Cardiac septum (tissue), 1 donor: ENCODE measurements at regions of chr2 and their contacts with region 1.

Region 1: DNA sequence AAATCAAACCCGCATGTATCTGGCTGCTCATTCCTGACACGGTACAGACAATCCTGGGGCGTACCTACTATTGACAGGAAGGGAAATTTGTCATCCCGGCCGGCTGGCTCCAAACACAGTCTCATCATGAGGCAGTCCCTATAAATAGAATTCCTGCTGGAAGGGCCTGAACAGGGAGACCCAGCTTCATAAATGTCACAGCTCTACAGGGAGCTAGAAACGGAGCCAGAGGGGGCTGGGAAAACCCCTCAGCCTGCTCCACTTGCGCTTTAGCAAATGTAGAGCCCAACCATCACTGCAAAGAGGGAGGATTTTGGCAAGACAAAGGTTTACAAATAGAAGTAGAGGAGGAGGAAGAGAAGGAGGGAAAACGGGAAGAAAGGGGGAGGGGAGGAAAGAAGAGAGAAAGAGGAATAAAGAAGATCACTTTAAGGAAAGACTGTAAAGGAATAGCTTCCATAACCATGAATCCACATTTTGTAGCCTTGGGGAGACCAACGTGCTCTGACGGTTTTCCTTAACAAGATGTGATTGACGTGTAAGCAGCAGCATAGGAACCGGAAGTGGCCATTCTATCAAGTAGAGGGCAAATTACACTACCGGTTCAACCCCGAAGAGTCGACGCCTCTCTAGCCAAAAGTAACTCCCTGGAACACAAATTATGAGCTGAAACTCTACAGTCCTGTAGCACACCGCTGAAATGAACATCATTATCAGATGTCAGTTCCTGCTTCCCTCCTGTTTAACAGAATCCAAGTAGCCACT is 56.8 kb upstream of the TTN start:
- DNase-seq: peak; percentile 89

Region 2: DNA sequence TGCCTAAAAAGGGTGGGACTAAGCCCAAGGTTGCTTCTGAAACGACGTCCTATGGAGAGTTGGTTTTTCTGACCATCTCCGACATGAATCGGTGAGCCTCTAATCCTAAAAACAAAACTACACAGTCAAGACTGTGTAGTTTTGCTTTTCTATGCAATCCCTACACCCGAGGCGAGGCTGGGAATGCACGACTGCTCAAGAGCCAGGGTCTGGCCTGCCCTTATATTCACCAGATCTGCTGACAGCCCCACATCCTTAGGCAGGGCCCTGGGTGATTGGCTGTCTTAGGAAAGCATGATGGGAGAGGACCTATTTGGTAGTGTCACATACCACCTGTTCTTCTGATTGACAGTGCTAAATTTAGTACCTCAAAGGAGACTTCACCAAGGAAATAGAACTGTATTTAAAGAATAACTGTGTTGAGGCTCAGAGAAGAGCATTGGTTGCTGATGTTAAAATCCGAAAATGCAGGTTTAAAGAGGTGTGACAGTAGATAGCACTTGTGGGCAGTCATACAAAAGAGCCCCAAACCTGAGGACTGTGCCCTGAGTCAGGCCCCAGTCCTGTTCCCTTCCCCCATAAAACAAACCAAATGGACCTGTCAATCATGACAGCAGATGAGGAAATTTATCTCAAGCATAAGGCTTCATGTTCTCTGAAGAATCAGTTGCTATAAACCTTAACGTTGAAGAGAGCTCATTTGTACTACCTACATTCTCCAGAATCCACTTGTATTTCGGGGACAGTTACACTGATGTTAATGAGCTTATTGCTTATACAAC is 56.6 kb before region 1 on chr2 and contains the start of gene TTN:
- intact Hi-C with region 1: loop called (anchors 2 kb)
- DNase-seq: peak; percentile 87
- total RNA-seq, gene TTN: 4,176 TPM

Region 3: GRCh38 chr2:178891265-178891958 is 27.4 kb after region 1 on chr2:
- intact Hi-C with region 1: loop called (anchors 2 kb)
- DNase-seq: no peak